ENCODE measurements at regions of chr14 and their contacts with region 1.

Region 1: GRCh38 chr14:24036169-24036962 is 15.4 kb upstream of the CARMIL3 start:
- DNase-seq: peak; percentile 92
- ATAC-seq: peak; percentile 98

Region 2: GRCh38 chr14:23984891-23985602 is 51.3 kb before region 1 on chr14:
- intact Hi-C with region 1: loop called (anchors 5 kb)
- DNase-seq: no peak
- ATAC-seq: peak; percentile 78

Measured in Right ventricle myocardium inferior (tissue), 1 donor.